Dorsolateral prefrontal cortex (tissue), 120 donors: ENCODE measurements at regions of chr11 and their contacts with region 1.

Region 1: GRCh38 chr11:113289431-113290187 is 24.8 kb upstream of the TTC12 start:
- DNase-seq: peak; percentile 64 to 83 (median 66)
- H3K4me3 ChIP-seq: no peak overlapping the region
- H3K27ac ChIP-seq: no peak overlapping the region
- H3K27me3 ChIP-seq: peaks cover 0 to 4% (median 0%) of the 10 kb centered on the region in 45 donors
- CTCF ChIP-seq: peak; percentile 73 to 98 (median 89)

Region 2: DNA sequence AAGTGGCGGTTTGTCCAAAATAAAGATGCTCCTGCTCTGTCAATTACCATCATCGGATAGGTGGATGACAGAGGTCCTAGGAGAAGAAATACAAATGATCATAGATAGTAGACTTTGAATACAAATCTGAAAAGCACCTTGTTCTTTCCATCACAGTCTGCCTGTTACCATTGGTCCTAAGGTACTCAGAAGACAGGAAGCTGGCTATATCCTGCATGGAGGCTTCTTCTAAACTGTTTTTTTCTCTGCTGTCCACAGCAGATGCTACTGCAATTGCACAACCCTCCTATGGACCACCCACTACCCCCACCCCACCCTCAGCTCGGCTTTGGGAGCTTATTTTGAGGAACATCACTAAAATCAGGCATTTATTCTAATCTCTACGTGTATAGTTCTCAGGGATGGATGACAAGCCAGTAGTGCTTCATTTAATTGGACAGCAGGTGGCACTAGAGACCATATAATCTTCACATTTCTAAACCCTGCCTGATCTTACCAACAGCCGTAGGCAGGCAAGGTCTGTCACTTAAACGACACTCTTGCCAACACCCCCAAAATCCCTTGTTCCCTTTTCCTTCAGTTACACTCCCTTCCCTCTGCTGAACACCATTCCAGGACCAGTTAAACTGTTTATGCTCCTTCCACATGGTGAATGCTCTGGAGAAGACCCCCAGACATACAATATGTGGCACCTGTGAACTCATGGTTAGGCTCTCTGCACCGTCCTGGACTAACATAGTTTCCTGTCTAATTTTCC is 1070.0 kb before region 1 on chr11:
- intact Hi-C with region 1: loop called in 1 of 2 experiments (anchors 5 kb)
- DNase-seq: peak in 2 of 10 donors; percentile 38 to 50
- H3K4me3 ChIP-seq: no peak overlapping the region
- H3K27ac ChIP-seq: peak overlapping the region in 13 of 59 donors; percentile 4 to 63 (median 36)
- H3K27me3 ChIP-seq: no peaks in the 10 kb centered on the region
- CTCF ChIP-seq: peak; percentile 56 to 92 (median 82)

Region 3: DNA sequence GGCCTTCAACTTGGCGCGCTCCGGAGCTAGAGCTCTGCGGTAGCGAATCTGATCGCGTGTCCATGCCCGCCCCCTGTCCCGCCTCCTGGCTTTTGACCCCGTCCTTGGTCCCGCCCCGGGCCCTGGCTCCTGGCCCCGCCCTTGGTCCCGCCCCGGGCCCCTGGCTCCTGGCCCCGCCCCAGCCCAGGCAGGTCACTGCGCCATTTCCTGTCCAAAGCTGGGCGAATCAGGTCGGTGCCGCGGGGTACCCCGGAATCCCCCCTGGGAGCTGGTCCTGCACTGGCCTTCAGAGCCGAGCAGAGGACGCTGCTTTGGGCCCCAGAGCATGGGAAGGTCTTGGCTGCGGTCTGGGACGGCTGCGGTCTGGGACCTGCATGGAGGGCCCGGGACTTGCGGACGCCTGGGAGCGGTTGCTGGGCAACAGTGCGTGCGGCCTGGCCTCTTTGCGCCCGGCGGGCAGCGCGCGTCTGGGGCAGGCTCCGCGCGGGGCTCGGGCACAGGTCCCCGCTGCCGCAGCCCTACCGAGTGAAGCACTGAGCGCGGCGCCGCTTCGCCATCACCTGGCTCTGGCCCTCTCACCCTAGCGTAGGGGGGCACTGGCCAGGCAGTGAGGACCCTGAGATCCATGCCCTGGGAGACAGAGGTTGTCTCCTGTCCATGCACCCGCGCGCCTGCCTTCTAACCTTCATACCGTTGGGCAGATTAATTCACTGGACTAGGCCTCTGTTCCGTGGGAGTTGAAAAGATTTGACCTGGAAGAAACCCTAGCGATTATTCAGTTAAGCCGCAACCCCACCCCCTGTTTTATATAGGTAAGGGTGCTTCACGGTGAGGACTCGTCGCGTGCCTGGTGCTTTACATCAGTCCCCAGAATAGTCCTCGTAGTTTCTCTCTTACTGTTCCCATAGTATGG is 25.0 kb after region 1 on chr11 and contains the start of gene TTC12:
- intact Hi-C with region 1: no loop called
- DNase-seq: peak; percentile 88 to 95 (median 92)
- H3K4me3 ChIP-seq: peak within 1 kb of the TSS; percentile 40 to 92 (median 76)
- H3K27ac ChIP-seq: peak within 1 kb of the TSS in 56 of 59 donors; percentile 20 to 92 (median 81)
- H3K27me3 ChIP-seq: no peaks in the 10 kb centered on the region
- CTCF ChIP-seq: peak in 28 of 56 donors; percentile 5 to 61 (median 30)
- total RNA-seq, gene TTC12: 4.3 to 31.8 (median 14.8) TPM